ENCODE measurements at regions of chr4 and their contacts with region 1.

Region 1: DNA sequence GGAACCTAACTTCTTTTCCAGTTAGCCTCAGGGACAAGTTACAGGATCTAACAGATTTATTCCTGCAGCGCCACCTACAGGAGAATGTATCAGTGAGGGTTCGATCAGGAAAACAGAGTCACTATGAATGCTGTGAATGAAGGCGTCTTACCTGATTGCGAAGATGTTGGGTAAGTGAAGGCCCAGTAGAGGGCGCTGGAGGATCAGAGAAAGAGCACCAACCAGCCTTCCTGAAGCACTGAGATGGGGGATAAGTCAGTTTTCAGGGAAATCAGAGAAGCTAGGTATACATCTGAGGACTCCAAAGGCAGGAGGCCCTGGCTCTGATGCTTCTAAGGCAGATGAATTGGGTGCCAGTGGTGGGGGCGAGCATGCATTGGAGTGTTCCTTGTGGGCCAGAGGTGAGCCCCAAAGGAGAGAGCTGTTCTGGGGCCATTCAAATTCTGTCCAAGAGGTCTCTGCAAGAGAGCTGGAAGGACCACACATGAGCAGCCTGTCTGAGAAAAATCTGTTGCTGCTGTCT is 169.9 kb upstream of the AADAT start:
- DNase-seq: peak; percentile 74
- H3K4me3 ChIP-seq: no peak overlapping the region
- CTCF ChIP-seq: peak; percentile 83

Region 2: GRCh38 chr4:170198747-170199146 is 60.9 kb before region 1 on chr4:
- CTCF ChIA-PET with region 1: interaction called, 105 read pairs
- POLR2A ChIA-PET with region 1: no interaction called
- DNase-seq: no peak
- H3K4me3 ChIP-seq: no peak overlapping the region
- CTCF ChIP-seq: peak; percentile 1

Region 3: DNA sequence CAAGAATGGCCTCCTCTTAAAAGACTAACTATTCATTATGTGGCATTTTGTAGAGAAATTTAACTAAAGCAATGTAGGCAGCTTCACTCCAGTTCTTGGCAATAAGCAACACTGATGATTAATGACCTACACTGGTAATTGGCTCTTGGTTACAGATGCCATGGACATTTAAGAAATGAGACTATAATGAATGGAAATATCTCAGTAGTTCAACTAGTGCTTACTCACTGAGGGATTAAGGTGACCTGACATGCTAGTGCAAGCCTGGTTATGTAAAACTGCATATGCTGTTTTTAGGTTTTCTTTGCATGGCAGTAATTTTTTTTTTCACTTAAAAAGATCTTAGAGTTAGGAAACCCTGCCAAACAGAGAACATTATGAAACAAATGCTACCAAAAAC is 17.2 kb before region 1 on chr4:
- CTCF ChIA-PET with region 1: interaction called, 91 read pairs
- POLR2A ChIA-PET with region 1: no interaction called
- DNase-seq: peak; percentile 49
- H3K4me3 ChIP-seq: no peak overlapping the region
- CTCF ChIP-seq: no peak

Region 4: GRCh38 chr4:170270628-170271027 is 10.9 kb after region 1 on chr4:
- CTCF ChIA-PET with region 1: interaction called, 29 read pairs
- POLR2A ChIA-PET with region 1: no interaction called
- DNase-seq: no peak
- H3K4me3 ChIP-seq: no peak overlapping the region
- CTCF ChIP-seq: no peak

Region 5: GRCh38 chr4:170853422-170854021 is 593.8 kb after region 1 on chr4:
- CTCF ChIA-PET with region 1: interaction called, 154 read pairs
- POLR2A ChIA-PET with region 1: no interaction called
- DNase-seq: no peak
- H3K4me3 ChIP-seq: no peak overlapping the region
- CTCF ChIP-seq: peak; percentile 78

Measured in AG04449 (cell line).